Naive thymus-derived CD4-positive, alpha-beta T cell (primary cell): ENCODE measurements at regions of chr19 and their contacts with region 1.

Region 1: GRCh38 chr19:10142701-10143375 is 23.1 kb upstream of the EIF3G start:
- DNase-seq: peak in 7 of 9 donors; percentile 47 to 77 (median 67)
- ATAC-seq: peak; percentile 95
- H3K4me3 ChIP-seq: peak overlapping the region; percentile 16
- H3K4me3 Mint-ChIP-seq: peak overlapping the region; percentile 78 to 94 (median 86)
- H3K27ac ChIP-seq: peak overlapping the region; percentile 82
- H3K27ac Mint-ChIP-seq: peak overlapping the region; percentile 96 to 100 (median 99)
- H3K4me1 ChIP-seq: peaks cover 41 to 49% of the 10 kb centered on the region in 2 donors
- H3K4me1 Mint-ChIP-seq: peaks cover 5 to 58% (median 42%) of the 10 kb centered on the region in 7 donors
- H3K27me3 ChIP-seq: no peaks in the 10 kb centered on the region
- H3K27me3 Mint-ChIP-seq: no peaks in the 10 kb centered on the region

Region 2: DNA sequence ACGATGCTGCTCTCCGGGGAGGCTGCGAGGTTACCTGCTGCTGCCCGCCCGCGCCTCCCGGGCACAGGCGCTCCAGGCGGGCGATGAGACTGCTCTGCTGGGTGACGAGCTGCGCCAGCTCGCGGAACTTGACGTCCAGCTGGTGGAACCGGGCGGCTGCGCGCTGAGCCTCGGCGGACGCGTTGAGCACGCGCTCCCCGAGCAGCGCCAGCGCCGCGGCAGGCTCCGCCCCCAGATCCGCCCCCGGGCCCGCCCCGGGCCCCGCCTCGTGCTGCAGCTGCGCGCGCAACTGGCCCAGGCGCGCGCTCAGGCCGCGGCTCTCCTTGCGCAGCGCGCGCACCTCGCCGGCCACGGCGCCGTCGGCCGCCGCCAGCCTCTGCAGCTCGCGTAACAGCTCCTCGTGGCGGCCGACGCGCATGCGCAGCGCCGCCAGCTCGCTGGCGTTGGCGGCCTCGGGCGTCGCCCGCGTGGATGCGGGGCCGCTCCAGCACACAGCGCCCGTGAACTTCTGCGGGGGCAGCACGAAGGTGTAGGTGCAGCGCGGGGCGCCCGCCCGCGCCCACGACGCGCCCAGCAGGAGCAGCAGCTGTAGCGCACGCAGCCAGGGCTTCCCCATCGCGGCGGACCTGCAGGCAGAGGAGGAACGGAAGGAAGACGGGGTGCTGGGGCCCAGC is 46.8 kb before region 1 on chr19:
- CTCF ChIA-PET with region 1: interaction called, 18 read pairs
- POLR2A ChIA-PET with region 1: interaction called, 34 read pairs
- intact Hi-C with region 1: loop called in 1 of 2 experiments (anchors 2 kb)
- DNase-seq: peak; percentile 86 to 98 (median 92)
- ATAC-seq: peak; percentile 95
- H3K4me3 ChIP-seq: peak overlapping the region; percentile 48
- H3K4me3 Mint-ChIP-seq: peak overlapping the region; percentile 27 to 73 (median 60)
- H3K27ac ChIP-seq: peak overlapping the region; percentile 77
- H3K27ac Mint-ChIP-seq: peak overlapping the region in 8 of 9 donors; percentile 41 to 92 (median 74)
- H3K4me1 ChIP-seq: peaks cover 21 to 22% of the 10 kb centered on the region in 2 donors
- H3K4me1 Mint-ChIP-seq: peaks cover 0 to 35% (median 25%) of the 10 kb centered on the region in 7 donors
- H3K27me3 ChIP-seq: no peaks in the 10 kb centered on the region
- H3K27me3 Mint-ChIP-seq: no peaks in the 10 kb centered on the region

Region 3: DNA sequence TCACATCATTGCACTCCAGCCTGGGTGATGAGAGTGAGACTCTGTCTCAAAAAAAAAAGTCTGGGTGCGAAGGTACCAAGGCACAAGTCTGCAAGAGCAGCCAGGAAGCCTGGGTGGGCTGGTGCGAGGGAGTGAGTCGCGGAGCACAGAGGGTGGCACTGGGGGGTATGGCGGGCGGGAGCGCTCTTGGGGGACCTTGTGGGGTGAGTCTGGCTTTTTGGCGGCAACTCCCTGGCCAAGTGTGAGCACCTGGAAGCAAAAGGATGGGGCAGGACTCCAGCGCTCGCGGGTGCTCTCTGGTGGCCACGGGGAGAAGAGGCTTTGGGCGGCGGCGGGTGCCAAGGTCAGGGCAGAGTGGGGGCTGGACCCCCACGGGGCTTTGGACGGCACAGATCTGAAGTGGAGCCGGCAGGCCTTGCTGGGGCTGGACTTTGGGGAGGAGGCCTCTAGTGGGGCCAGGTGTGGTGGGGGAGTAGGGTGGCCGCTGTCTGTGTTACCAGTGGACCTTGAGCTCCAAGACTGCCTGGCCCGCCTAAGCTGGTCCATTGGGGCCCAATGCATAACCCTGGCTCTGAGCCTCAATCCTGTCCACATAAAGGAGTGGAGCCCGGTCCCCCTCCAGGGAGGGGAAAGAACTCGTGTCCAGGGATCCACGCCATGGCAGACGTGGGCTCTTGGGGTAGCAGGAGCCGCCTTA is 29.8 kb before region 1 on chr19:
- CTCF ChIA-PET with region 1: interaction called, 10 read pairs
- POLR2A ChIA-PET with region 1: interaction called, 31 read pairs
- intact Hi-C with region 1: no loop called
- DNase-seq: peak; percentile 30 to 72 (median 52)
- ATAC-seq: peak; percentile 65
- H3K4me3 ChIP-seq: peak overlapping the region; percentile 33
- H3K4me3 Mint-ChIP-seq: peak overlapping the region in 9 of 10 donors; percentile 15 to 75 (median 50)
- H3K27ac ChIP-seq: peak overlapping the region; percentile 60
- H3K27ac Mint-ChIP-seq: peak overlapping the region; percentile 51 to 92 (median 83)
- H3K4me1 ChIP-seq: peaks cover 26 to 39% of the 10 kb centered on the region in 2 donors
- H3K4me1 Mint-ChIP-seq: peaks cover 0 to 43% (median 34%) of the 10 kb centered on the region in 7 donors
- H3K27me3 ChIP-seq: no peaks in the 10 kb centered on the region
- H3K27me3 Mint-ChIP-seq: no peaks in the 10 kb centered on the region

Region 4: DNA sequence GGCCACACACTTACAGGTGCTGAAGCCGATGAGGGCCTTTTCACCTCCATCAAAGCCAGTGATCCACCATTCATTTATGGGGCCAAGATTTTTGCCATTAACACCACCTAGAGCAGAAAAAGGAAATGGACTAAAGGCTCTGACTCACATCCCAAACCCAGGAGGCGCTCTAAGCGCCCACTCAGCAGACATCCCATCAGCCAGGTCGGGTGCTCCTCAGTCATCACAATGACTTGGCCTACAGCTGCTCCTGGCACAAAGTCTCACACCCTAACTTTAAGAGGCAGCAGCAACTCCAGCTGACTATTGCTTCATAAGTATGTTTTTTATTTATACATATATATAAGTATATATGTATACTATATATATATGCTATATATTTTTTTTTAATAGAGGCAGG is 13.0 kb after region 1 on chr19:
- CTCF ChIA-PET with region 1: interaction called, 11 read pairs
- POLR2A ChIA-PET with region 1: interaction called, 4 read pairs
- intact Hi-C with region 1: no loop called
- DNase-seq: no peak
- ATAC-seq: no peak
- H3K4me3 ChIP-seq: no peak overlapping the region
- H3K4me3 Mint-ChIP-seq: no peak overlapping the region
- H3K27ac ChIP-seq: no peak overlapping the region
- H3K27ac Mint-ChIP-seq: peak overlapping the region in 2 of 9 donors; percentile 47 to 72
- H3K4me1 ChIP-seq: no peaks in the 10 kb centered on the region
- H3K4me1 Mint-ChIP-seq: peaks cover 0 to 3% (median 0%) of the 10 kb centered on the region in 7 donors
- H3K27me3 ChIP-seq: no peaks in the 10 kb centered on the region
- H3K27me3 Mint-ChIP-seq: no peaks in the 10 kb centered on the region

Region 5: DNA sequence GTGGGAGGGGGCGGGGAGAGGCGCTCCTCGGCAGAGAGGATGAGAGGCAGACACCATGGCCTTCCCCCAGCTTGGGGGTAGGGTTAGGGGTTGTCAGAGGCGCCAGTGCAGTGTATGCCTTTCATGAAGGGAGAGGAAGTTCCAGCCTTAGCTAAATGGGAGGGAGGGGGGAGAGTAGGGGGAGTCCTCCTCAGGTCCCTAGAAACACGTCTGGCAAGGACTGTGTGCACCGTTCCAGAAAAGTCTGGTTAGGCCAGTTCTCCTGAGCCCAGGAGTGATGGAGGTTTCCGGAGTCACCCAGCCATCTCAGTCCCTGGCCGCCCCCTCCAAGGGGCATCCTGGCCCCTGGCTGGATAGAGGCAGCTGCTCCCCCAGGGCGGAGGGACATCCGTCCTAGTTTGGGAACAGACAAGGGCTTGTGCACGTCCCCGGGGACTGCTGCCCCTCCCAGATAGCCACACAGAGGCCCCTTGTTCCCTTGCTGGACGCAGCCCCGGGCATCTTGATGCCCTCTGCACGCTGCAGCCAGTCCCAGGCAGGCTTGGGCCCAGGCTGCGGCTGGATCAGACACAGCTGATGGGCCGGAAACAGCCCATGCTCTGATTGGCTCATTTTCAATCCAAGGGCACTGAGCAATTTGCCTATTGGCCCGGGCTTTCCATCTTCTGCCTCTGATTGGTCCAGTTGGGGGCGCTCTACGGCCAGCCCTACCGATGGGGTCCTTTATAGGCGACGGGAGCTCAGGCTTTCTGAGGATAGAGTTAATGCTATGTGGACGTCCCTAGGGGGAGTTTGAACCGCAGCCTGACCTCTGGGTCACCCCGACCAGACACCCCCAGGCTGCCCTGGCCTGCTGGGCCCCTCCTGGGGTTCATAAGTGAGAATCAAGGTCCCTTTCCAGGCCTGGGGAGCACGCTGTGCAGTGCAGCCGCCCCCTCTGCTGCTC is 84.5 kb after region 1 on chr19:
- CTCF ChIA-PET with region 1: no interaction called
- POLR2A ChIA-PET with region 1: no interaction called
- intact Hi-C with region 1: no loop called
- DNase-seq: no peak
- ATAC-seq: no peak
- H3K4me3 ChIP-seq: no peak overlapping the region
- H3K4me3 Mint-ChIP-seq: no peak overlapping the region
- H3K27ac ChIP-seq: no peak overlapping the region
- H3K27ac Mint-ChIP-seq: no peak overlapping the region
- H3K4me1 ChIP-seq: peaks cover 8 to 12% of the 10 kb centered on the region in 2 donors
- H3K4me1 Mint-ChIP-seq: peaks cover 7 to 28% (median 14%) of the 10 kb centered on the region in 7 donors
- H3K27me3 ChIP-seq: no peaks in the 10 kb centered on the region
- H3K27me3 Mint-ChIP-seq: no peaks in the 10 kb centered on the region

Region 6: DNA sequence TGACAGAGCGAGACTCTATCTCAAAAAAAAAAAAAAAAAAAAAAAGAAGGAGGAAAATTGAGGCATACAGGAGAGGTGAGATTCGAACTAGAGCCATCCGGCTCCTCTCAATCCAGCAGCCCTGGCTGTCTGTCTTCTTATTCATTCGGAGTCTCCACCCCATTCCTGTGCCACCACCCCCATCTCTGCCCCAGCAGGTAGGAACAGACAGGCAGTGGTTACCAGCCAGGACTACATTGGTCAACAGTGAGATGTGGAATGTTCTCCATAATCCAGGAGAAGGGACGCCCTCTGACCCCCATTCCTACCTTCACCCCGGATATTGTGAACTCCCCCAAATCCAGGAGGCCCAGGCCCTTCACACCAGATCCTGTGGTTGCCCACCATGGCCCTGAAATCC is 94.9 kb after region 1 on chr19:
- CTCF ChIA-PET with region 1: interaction called, 3 read pairs
- POLR2A ChIA-PET with region 1: interaction called, 5 read pairs
- intact Hi-C with region 1: loop called in 1 of 2 experiments (anchors 2 kb)
- DNase-seq: no peak
- ATAC-seq: no peak
- H3K4me3 ChIP-seq: no peak overlapping the region
- H3K4me3 Mint-ChIP-seq: peak overlapping the region in 2 of 10 donors; percentile 13 to 29
- H3K27ac ChIP-seq: no peak overlapping the region
- H3K27ac Mint-ChIP-seq: peak overlapping the region in 1 of 9 donors; percentile 34
- H3K4me1 ChIP-seq: peaks cover 10 to 14% of the 10 kb centered on the region in 2 donors
- H3K4me1 Mint-ChIP-seq: peaks cover 6 to 27% (median 17%) of the 10 kb centered on the region in 7 donors
- H3K27me3 ChIP-seq: no peaks in the 10 kb centered on the region
- H3K27me3 Mint-ChIP-seq: no peaks in the 10 kb centered on the region

Region 7: DNA sequence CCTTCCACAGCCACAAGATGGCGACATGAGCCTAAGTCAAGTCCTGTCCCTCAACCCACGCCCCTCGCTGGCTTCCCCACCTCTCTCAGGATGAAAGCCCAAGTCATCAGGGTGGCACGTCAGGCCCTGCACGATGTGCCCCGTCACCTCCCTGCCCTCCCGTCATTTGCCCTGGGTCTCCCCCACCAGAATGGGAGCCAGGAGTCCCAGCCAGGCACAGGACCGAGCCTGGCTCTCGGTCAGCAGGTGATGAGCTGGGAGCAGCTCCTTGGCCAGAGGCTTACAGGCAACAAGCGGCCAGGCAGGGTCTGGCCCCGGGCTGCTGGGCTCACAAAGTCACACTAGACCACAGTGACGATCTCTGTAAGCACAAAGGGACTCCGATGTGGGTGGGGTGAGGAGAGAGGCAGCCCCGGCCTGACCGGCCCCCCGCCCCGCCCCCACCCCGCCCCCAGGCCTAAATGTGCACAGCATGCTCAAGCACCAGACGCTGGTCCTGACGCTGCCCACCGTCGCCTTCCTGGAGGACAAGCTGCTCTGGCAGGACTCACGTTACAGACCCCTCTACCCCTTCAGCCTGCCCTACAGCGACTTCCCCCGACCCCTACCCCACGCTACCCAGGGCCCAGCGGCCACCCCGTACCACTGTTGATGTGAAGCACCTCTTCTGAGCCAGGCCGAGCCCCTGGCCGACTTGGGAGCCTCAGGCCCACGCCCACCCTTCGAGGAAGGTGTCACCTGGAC is 116.5 kb after region 1 on chr19:
- CTCF ChIA-PET with region 1: no interaction called
- POLR2A ChIA-PET with region 1: no interaction called
- intact Hi-C with region 1: no loop called
- DNase-seq: peak; percentile 61 to 88 (median 82)
- ATAC-seq: peak; percentile 95
- H3K4me3 ChIP-seq: no peak overlapping the region
- H3K4me3 Mint-ChIP-seq: peak overlapping the region in 1 of 10 donors; percentile 49
- H3K27ac ChIP-seq: no peak overlapping the region
- H3K27ac Mint-ChIP-seq: peak overlapping the region in 1 of 9 donors; percentile 87
- H3K4me1 ChIP-seq: no peaks in the 10 kb centered on the region
- H3K4me1 Mint-ChIP-seq: peaks cover 0 to 29% (median 4%) of the 10 kb centered on the region in 7 donors
- H3K27me3 ChIP-seq: no peaks in the 10 kb centered on the region
- H3K27me3 Mint-ChIP-seq: no peaks in the 10 kb centered on the region